Cardiac septum (tissue), 1 donor: ENCODE measurements at regions of chr16 and their contacts with region 1.

Region 1: DNA sequence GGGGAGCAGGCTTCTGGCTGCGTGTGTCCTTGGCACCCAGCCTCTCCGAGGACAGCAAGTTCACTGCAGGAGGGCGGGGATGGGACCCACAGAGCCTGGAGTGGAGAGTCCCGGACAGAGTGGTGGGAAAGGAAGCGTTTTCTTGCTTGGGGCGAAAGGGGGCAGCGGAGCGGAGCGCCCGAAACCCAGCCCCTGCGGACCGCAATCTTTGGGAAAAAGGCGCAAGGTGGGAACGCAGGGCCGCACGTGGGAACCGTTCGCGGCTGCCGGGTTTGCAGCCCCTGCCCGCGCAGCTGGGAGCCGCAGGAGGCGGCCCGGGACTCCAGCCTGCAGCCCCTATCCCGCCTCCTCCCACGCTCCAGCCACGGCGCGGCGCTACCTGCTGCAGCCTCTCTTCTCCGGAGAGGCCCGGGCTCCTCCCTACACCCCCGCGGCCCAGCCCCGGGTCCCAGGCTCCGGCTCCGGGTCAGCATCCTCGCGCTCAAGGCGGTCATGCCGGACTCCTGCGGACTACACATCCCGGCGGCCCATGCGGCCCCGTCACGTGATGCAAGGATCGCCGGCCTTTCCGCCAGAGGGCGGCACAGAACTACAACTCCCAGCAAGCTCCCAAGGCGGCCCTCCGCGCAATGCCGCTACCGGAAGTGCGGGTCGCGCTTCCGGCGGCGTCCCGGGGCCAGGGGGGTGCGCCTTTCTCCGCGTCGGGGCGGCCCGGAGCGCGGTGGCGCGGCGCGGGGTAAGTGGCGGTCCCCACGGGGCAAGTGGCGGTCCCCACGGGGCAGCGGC is at the starts of genes NTHL1 and TSC2:
- DNase-seq: peak; percentile 98
- total RNA-seq, gene NTHL1: 10.4 TPM
- total RNA-seq, gene TSC2: 73.3 TPM

Region 2: GRCh38 chr16:1983544-1984346 is 63.8 kb before region 1 on chr16 and contains the start of gene GFER:
- intact Hi-C with region 1: no loop called
- DNase-seq: peak; percentile 95
- total RNA-seq, gene GFER: 25.5 TPM

Region 3: GRCh38 chr16:2009789-2010510 is 37.6 kb before region 1 on chr16 and contains the start of gene ZNF598:
- intact Hi-C with region 1: loop called (anchors 5 kb)
- DNase-seq: peak; percentile 90
- total RNA-seq, gene ZNF598: 21.9 TPM

Region 4: DNA sequence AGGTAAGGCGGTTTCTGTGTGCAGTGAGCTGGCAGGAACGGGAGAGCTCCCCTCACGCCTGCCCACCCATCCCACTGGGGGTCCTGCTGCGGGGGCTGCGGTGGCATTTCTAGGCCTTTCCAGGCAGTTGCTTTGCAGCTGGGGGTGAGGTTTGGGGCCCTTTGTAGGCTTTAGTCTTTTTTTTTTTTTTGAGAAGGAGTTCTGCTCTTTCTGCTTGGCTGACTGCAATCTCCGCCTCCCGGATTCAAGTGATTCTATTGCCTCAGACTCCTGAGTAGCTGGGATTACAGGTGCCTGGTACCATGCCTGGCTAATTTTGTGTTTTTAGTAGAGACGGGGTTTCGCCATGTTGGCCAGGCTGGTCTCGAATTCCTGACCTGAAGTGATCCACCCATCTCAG is 11.3 kb after region 1 on chr16:
- intact Hi-C with region 1: no loop called
- DNase-seq: no peak

Region 5: GRCh38 chr16:2236337-2237101 is 189.0 kb after region 1 on chr16 and contains the start of gene DNASE1L2:
- intact Hi-C with region 1: no loop called
- DNase-seq: no peak
- total RNA-seq, gene DNASE1L2: 0.57 TPM